Endothelial cell of umbilical vein (primary cell): ENCODE measurements at regions of chr15 and their contacts with region 1.

Region 1: DNA sequence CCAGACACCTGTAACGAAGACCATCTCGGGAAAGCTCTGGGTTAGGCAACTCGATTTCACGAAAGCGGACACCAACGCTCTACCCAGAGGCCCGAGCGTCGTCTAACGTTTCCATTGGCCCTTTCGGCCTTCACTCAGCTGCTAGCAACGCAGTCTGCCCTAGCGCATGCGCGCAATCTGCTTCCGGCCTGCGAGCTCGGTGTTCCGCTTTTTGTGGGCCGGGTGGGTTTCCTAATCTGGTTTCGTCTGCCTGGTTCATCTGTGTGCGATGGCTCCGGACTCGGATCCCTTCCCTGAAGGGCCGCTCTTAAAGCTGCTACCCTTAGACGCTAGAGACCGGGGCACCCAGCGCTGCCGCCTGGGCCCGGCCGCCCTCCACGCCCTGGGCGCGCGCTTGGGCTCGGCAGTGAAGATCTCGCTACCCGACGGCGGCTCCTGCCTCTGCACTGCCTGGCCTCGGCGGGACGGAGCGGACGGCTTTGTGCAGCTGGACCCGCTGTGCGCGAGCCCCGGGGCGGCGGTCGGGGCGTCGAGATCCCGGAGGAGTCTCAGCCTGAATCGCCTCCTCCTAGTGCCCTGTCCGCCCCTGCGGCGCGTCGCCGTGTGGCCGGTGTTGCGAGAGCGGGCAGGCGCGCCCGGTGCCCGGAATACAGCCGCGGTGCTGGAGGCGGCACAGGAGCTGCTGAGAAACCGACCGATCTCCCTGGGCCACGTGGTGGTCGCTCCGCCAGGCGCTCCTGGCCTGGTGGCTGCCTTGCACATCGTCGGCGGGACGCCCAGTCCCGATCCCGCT is 24.0 kb upstream of the GATM start:
- DNase-seq: peak; percentile 98
- H3K4me3 ChIP-seq: peak overlapping the region; percentile 48 to 85 (median 76)
- H3K27ac ChIP-seq: peak overlapping the region; percentile 21
- H3K4me1 ChIP-seq: peaks cover 10% of the 10 kb centered on the region
- H3K27me3 ChIP-seq: no peaks in the 10 kb centered on the region
- CTCF ChIP-seq: no peak
- POLR2A ChIP-seq: peak; percentile 98

Region 2: GRCh38 chr15:45126535-45127158 is 275.7 kb before region 1 on chr15:
- CTCF ChIA-PET with region 1: interaction called, 13 read pairs
- POLR2A ChIA-PET with region 1: no interaction called
- dilution Hi-C with region 1: no loop called
- intact Hi-C with region 1: no loop called
- DNase-seq: peak; percentile 37
- H3K4me3 ChIP-seq: no peak overlapping the region
- H3K27ac ChIP-seq: no peak overlapping the region
- H3K4me1 ChIP-seq: peaks cover 6% of the 10 kb centered on the region
- H3K27me3 ChIP-seq: peaks cover 57 to 77% of the 10 kb centered on the region in 2 experiments
- CTCF ChIP-seq: peak; percentile 44 to 50
- POLR2A ChIP-seq: no peak

Region 3: GRCh38 chr15:45205192-45205591 is 197.2 kb before region 1 on chr15:
- CTCF ChIA-PET with region 1: interaction called, 10 read pairs
- POLR2A ChIA-PET with region 1: interaction called, 3 read pairs
- dilution Hi-C with region 1: no loop called
- intact Hi-C with region 1: loop called (anchors 1 kb)
- DNase-seq: peak; percentile 33
- H3K4me3 ChIP-seq: no peak overlapping the region
- H3K27ac ChIP-seq: no peak overlapping the region
- H3K4me1 ChIP-seq: peaks cover 3% of the 10 kb centered on the region
- H3K27me3 ChIP-seq: peaks cover 9 to 12% of the 10 kb centered on the region in 2 experiments
- CTCF ChIP-seq: peak; percentile 73 to 88
- POLR2A ChIP-seq: no peak

Region 4: GRCh38 chr15:45279024-45279698 is 123.2 kb before region 1 on chr15:
- CTCF ChIA-PET with region 1: no interaction called
- POLR2A ChIA-PET with region 1: no interaction called
- dilution Hi-C with region 1: no loop called
- intact Hi-C with region 1: loop called (anchors 2 kb)
- DNase-seq: peak; percentile 96
- H3K4me3 ChIP-seq: peak overlapping the region; percentile 10 to 60 (median 46)
- H3K27ac ChIP-seq: peak overlapping the region; percentile 32
- H3K4me1 ChIP-seq: peaks cover 8% of the 10 kb centered on the region
- H3K27me3 ChIP-seq: no peaks in the 10 kb centered on the region
- CTCF ChIP-seq: no peak
- POLR2A ChIP-seq: peak; percentile 79

Region 5: DNA sequence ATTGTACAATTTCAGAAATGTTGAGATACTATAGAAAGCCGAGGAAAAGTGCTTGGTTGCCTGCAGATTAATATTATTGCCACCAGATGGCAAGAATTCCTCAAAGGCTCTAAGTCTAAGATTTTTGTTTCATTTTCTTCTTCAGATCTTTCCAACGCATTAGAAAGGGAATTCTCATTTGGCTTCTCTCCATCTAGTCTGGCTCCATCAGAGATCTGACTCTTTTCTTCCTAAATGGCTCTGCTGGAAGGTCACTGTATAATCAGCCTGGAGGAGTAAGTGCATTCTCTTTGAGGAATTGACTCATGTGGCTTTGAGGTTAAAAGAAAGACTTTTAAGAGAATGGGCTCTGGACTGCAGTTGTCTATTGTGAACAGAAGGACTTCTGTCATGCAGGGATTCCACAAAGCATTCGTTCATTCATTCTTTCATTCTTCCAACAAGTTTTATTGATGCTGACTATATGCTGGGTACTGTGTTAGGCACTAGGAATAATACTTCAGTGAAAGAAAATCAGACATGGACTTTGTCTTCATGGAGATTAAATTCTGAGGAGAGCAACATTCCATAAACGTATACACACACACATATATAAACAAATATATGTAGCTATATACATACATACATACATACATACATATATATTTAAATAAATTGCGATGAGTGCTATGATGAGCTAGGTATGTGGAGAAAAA is 95.0 kb before region 1 on chr15:
- CTCF ChIA-PET with region 1: no interaction called
- POLR2A ChIA-PET with region 1: no interaction called
- dilution Hi-C with region 1: no loop called
- intact Hi-C with region 1: loop called (anchors 1 kb)
- DNase-seq: peak; percentile 41
- H3K4me3 ChIP-seq: no peak overlapping the region
- H3K27ac ChIP-seq: no peak overlapping the region
- H3K4me1 ChIP-seq: no peaks in the 10 kb centered on the region
- H3K27me3 ChIP-seq: peaks cover 2 to 5% of the 10 kb centered on the region in 2 experiments
- CTCF ChIP-seq: peak; percentile 10 to 15
- POLR2A ChIP-seq: no peak

Region 6: GRCh38 chr15:45378149-45378912 is 24.0 kb before region 1 on chr15 and contains the start of gene GATM:
- CTCF ChIA-PET with region 1: interaction called, 7 read pairs
- POLR2A ChIA-PET with region 1: interaction called, 3 read pairs
- dilution Hi-C with region 1: no loop called
- intact Hi-C with region 1: loop called (anchors 2 kb)
- DNase-seq: peak; percentile 82
- H3K4me3 ChIP-seq: peak within 1 kb of the TSS; percentile 24 to 40 (median 35)
- H3K27ac ChIP-seq: no peak within 1 kb of the TSS
- H3K4me1 ChIP-seq: peaks cover 13% of the 10 kb centered on the region
- H3K27me3 ChIP-seq: peaks cover 41 to 63% of the 10 kb centered on the region in 2 experiments
- CTCF ChIP-seq: peak; percentile 29 to 64
- POLR2A ChIP-seq: no peak
- total RNA-seq, gene GATM: 0.48 and 0.60 TPM in 2 replicates

Region 7: DNA sequence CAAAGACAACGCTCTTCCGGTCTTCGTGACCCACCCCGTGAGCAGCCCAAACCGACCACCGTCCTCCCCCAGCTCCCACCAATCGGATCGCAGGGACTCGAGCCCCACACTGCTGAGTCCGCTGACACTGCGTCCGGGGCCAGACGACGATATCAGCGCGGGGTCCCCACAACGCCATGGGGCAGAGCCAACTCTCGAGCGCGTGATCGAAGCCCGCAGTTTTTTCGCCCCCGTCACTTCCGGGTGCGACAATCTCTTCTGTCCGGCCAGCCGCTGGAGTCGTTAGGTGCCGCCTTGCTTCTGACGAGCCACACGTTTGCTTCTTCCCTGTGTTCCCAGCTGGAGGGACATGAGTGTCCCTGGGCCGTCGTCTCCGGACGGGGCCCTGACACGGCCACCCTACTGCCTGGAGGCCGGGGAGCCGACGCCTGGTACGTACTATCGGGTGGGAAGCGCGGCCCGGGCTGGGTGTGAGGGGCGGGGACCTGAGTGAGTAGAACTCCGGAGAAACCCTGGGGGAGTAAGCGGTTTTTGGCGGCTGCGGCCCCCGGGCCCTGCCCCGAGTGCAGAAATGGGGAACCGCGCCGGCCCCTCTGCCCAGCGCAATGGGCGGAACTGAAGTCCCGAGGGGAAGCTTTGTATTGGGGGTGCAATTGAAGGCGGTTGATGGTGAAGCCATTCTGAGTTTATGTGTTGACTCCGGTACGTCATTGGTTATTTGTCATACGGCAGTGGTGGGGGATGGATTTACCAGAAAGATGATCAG is 184.9 kb after region 1 on chr15 and contains the start of gene BLOC1S6:
- CTCF ChIA-PET with region 1: no interaction called
- POLR2A ChIA-PET with region 1: interaction called, 3 read pairs
- dilution Hi-C with region 1: no loop called
- intact Hi-C with region 1: loop called (anchors 1 kb)
- DNase-seq: peak; percentile 92
- H3K4me3 ChIP-seq: peak within 1 kb of the TSS; percentile 89 to 98 (median 90)
- H3K27ac ChIP-seq: peak within 1 kb of the TSS; percentile 83
- H3K4me1 ChIP-seq: peaks cover 29% of the 10 kb centered on the region
- H3K27me3 ChIP-seq: peaks cover 0 to 2% of the 10 kb centered on the region in 2 experiments
- CTCF ChIP-seq: no peak
- POLR2A ChIP-seq: peak; percentile 89
- total RNA-seq, gene BLOC1S6: 39.2 and 43.4 TPM in 2 replicates